ENCODE measurements at regions of chr6 and their contacts with region 1.

Region 1: DNA sequence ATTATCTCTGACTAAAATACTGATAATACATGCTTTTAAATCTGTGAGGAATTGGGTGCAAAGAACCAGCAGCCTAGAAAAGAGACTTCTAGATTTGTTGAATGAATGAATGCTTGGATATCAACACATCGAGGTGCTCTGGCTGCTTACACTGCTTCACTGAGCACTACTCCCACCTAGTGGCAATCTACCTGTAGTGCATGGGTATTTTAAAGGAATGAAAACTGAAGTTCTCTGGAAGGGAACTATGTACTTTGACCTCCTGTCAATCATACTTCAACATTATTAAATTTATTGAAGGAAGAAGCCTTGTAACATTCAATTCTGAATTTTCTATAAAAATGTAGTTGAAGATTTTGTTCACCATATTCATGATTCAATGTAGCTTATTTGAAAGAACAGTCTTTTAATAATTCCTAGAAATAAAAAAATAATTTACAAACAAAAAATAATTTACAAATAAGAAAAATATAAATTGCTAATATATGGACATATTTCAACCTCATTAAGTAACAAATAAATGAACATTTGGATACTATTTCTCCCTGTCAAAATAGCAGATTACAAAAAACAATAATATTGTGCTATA is 111.2 kb upstream of the MMS22L start:
- DNase-seq: peak; percentile 81
- H3K4me3 ChIP-seq: no peak overlapping the region
- H3K27ac ChIP-seq: no peak overlapping the region
- H3K4me1 ChIP-seq: no peaks in the 10 kb centered on the region
- H3K27me3 ChIP-seq: no peaks in the 10 kb centered on the region
- CTCF ChIP-seq: peak; percentile 89

Region 2: DNA sequence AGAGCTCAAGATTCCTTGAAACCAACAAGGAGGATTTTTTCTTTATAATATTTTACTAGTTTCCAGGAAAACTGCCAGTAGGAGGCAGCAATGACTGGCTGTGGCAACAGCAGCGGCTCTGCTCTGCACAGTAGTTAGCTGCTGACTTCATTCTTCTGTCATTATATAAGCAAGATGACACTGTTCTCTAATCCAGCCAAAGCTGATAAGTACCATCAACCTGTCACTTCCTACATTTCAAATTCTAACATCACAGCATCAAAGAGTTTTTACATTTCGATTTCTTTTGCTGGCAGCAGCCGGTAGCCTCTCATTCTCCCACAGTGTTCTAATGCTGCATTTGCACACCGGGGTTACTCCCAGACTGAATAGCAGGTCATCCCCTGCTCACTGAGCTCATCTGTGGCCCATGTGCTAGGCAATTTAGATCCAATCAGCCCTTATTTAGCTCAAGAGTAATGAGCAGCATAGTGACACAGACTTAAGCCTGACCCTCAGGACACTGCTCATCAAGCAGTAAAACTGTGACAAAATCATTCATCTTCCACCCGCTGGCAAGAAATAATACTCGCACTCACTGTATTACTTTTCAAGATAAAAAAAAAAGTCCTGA is 179.0 kb before region 1 on chr6:
- CTCF ChIA-PET with region 1: interaction called, 3 read pairs
- POLR2A ChIA-PET with region 1: no interaction called
- intact Hi-C with region 1: loop called (anchors 1 kb)
- DNase-seq: peak; percentile 88
- H3K4me3 ChIP-seq: peak overlapping the region; percentile 3
- H3K27ac ChIP-seq: peak overlapping the region; percentile 57
- H3K4me1 ChIP-seq: peaks cover 20% of the 10 kb centered on the region
- H3K27me3 ChIP-seq: no peaks in the 10 kb centered on the region
- CTCF ChIP-seq: peak; percentile 78

Region 3: GRCh38 chr6:97939440-97940168 is 545.4 kb after region 1 on chr6:
- CTCF ChIA-PET with region 1: no interaction called
- POLR2A ChIA-PET with region 1: no interaction called
- intact Hi-C with region 1: no loop called
- DNase-seq: no peak
- H3K4me3 ChIP-seq: no peak overlapping the region
- H3K27ac ChIP-seq: no peak overlapping the region
- H3K4me1 ChIP-seq: peaks cover 9% of the 10 kb centered on the region
- H3K27me3 ChIP-seq: no peaks in the 10 kb centered on the region
- CTCF ChIP-seq: no peak

Measured in A673 (cell line).